ENCODE measurements at regions of chr18 and their contacts with region 1.

Region 1: GRCh38 chr18:8982416-8983184 is 119.9 kb upstream of the NDUFV2 start:
- DNase-seq: peak; percentile 61
- H3K4me3 ChIP-seq: no peak overlapping the region; a peak in 1 of 4 replicates
- H3K27ac ChIP-seq: no peak overlapping the region
- H3K4me1 ChIP-seq: peaks cover 4 to 6% of the 10 kb centered on the region in 2 experiments; a peak in 2 of 4 replicates
- H3K27me3 ChIP-seq: no peaks in the 10 kb centered on the region
- CTCF ChIP-seq: peak; percentile 73
- EP300 ChIP-seq: no peak
- RAD21 ChIP-seq: peak; percentile 91

Region 2: DNA sequence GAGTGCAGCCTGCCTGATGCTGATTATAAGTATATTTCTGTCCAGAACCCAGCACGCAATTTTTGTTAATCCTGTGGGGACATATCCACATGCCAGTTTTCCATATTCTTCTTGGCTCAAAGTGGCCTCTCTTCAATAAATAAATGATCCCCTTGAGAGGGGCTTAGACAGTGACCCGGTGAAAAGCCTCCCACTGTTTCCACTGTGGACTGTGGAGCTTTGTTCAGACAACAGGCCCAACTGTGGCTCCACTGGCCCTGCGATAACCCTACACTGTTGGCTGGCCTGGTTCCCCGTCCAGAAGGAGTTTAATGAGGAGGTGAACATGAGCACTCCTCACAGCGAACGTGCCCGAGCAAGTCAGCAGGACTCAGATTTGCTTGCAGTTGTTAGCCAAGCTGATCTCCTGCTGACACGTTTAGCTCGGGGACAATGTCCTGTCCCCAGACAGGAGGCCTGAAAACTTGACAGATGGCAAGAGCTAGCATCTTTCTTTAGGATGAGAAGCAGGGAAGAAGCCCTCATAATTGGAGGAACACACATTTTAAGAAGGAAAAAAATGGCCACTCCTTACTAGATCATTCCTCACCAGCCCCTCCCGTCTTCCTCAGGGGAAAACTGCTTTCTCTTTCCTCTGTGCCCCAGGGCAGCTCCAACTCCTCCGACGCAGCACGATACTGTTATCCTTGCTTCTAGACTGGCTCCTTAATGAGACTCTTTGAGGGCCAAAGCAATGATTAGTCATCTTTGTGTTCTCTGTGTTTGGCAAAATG is 297.3 kb before region 1 on chr18:
- CTCF ChIA-PET with region 1: interaction called, 15 read pairs
- POLR2A ChIA-PET with region 1: no interaction called
- DNase-seq: no peak
- H3K4me3 ChIP-seq: no peak overlapping the region
- H3K27ac ChIP-seq: no peak overlapping the region
- H3K4me1 ChIP-seq: no peaks in the 10 kb centered on the region
- H3K27me3 ChIP-seq: no peaks in the 10 kb centered on the region
- CTCF ChIP-seq: no peak
- EP300 ChIP-seq: no peak
- RAD21 ChIP-seq: no peak

Region 3: DNA sequence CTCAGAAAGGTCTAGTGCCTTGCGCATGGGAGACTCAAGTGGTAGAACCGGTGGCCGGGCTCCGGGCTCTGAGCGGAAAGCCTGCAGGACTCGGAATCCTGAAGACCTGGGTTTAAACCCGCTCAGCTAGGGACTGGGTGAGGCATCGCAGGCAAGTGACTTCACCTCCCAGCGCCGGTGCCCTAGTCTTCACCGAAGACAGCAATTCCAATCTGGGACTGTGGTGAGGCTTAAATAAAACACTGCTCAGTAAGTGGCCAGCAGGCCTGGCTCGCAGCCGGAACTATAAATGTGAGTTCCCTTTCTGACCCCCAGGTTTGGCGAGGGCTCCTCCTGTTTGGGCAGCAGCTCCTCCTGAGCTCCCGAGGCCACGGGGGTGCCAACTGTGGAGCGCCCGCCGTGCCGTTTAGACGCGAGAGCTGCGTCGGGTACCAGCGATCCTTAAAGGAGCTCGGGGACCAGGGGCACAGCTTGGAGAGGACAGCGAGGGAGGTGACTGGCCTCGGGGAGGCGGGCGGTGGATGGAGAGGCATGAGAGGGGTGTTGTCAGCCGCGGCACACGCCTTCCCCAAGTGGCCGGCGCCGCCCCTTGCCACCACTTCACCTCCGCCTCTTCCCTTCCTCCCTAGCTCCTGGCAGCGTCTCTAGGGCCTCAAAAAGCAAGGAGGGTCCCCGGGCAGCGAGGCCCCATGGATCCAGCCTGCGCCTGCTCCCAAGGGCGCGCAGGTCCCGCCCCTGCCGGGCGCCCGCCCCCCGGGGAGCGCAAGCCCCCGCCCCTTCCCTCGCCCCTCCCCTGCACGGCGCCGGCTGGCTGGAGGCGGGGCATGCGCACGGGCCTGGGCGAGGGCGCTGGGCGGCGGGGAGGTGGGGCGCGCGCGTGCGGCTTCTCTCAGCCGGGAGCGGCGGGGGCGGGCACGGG is 278.0 kb before region 1 on chr18:
- CTCF ChIA-PET with region 1: interaction called, 34 read pairs
- POLR2A ChIA-PET with region 1: interaction called, 16 read pairs
- DNase-seq: peak; percentile 99
- H3K4me3 ChIP-seq: peak overlapping the region; percentile 66 to 83
- H3K27ac ChIP-seq: peak overlapping the region; percentile 86 to 87
- H3K4me1 ChIP-seq: peaks cover 20 to 25% of the 10 kb centered on the region in 2 experiments
- H3K27me3 ChIP-seq: no peaks in the 10 kb centered on the region
- CTCF ChIP-seq: no peak
- EP300 ChIP-seq: no peak
- RAD21 ChIP-seq: no peak

Region 4: GRCh38 chr18:8808001-8808400 is 174.6 kb before region 1 on chr18:
- CTCF ChIA-PET with region 1: interaction called, 10 read pairs
- POLR2A ChIA-PET with region 1: no interaction called
- DNase-seq: peak; percentile 79
- H3K4me3 ChIP-seq: no peak overlapping the region
- H3K27ac ChIP-seq: 0 out of 4 replicates have a peak overlapping the region, but pooled peaks of 1 of the 2 experiments have one; percentile 16
- H3K4me1 ChIP-seq: peaks cover 5 to 6% of the 10 kb centered on the region in 2 experiments; a peak in 3 of 4 replicates
- H3K27me3 ChIP-seq: no peaks in the 10 kb centered on the region
- CTCF ChIP-seq: no peak
- EP300 ChIP-seq: peak in 1 of 2 experiments; percentile 32; a peak in 1 of 4 replicates
- RAD21 ChIP-seq: peak; percentile 26; the same call in 1 of the 2 replicates

Measured in SK-N-SH (cell line).